HepG2 (cell line): ENCODE measurements at regions of chr18 and their contacts with region 1.

Region 1: GRCh38 chr18:49967171-49967570 is 153.8 kb upstream of the ACAA2 start:
- DNase-seq: peak; percentile 93
- ATAC-seq: peak; percentile 94
- H3K4me3 ChIP-seq: peak overlapping the region; percentile 22 to 60 (median 35); a peak in 5 of 6 replicates
- H3K27ac ChIP-seq: peak overlapping the region; percentile 76
- H3K4me1 ChIP-seq: peaks cover 44% of the 10 kb centered on the region
- H3K27me3 ChIP-seq: no peaks in the 10 kb centered on the region
- CTCF ChIP-seq: no peak
- EP300 ChIP-seq: peak in 1 of 2 experiments; percentile 53; a peak in 2 of 4 replicates
- POLR2A ChIP-seq: no peak
- RAD21 ChIP-seq: no peak

Region 2: GRCh38 chr18:49431165-49431962 is 535.8 kb before region 1 on chr18:
- CTCF ChIA-PET with region 1: no interaction called
- POLR2A ChIA-PET with region 1: no interaction called
- in situ Hi-C with region 1: no loop called
- intact Hi-C with region 1: no loop called
- DNase-seq: no peak
- ATAC-seq: no peak
- H3K4me3 ChIP-seq: no peak overlapping the region
- H3K27ac ChIP-seq: no peak overlapping the region
- H3K4me1 ChIP-seq: peaks cover under 1% of the 10 kb centered on the region; the same call in 1 of the 2 replicates
- H3K27me3 ChIP-seq: no peaks in the 10 kb centered on the region
- CTCF ChIP-seq: no peak
- EP300 ChIP-seq: no peak
- POLR2A ChIP-seq: no peak
- RAD21 ChIP-seq: no peak

Region 3: DNA sequence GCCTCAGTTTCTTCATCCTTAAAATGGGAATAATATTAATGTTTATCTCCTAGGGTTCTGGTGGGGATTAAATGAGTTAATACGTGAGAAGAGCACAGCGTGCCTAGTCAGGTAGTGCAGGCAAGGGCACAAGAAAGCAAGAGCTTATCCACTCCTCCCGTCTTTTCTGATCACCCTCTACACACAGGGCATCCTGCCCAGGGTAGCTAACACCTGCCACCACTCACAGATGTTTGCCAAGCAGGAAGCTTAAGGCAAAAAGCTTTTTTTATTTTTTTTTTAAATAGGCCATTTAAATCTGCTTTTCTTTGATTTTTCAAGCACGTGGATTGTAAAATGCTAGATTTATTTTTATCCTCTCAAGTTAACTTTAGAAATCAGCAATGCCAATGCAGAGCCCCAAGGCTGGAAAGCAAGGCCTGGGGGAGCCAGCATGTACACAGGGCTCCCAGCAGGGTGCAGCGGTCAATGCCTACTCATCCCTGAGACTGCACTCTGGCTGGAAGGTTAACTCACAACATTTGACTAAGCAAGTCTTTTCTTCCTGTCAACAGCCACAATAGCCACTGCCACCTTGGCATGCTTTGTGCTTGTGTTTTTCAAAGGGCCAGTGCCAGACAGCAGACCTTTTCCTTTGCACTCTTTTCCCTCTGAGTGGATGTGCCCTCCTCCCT is 67.4 kb before region 1 on chr18:
- CTCF ChIA-PET with region 1: no interaction called
- POLR2A ChIA-PET with region 1: no interaction called
- in situ Hi-C with region 1: no loop called
- intact Hi-C with region 1: loop called (anchors 5 kb)
- DNase-seq: peak; percentile 27
- ATAC-seq: peak; percentile 92
- H3K4me3 ChIP-seq: no peak overlapping the region
- H3K27ac ChIP-seq: no peak overlapping the region
- H3K4me1 ChIP-seq: no peaks in the 10 kb centered on the region
- H3K27me3 ChIP-seq: no peaks in the 10 kb centered on the region
- CTCF ChIP-seq: peak; percentile 47
- EP300 ChIP-seq: no peak
- POLR2A ChIP-seq: no peak
- RAD21 ChIP-seq: peak; percentile 30; the same call in 1 of the 2 replicates